PC-3 (cell line): ENCODE measurements at regions of chr1 and their contacts with region 1.

Region 1: DNA sequence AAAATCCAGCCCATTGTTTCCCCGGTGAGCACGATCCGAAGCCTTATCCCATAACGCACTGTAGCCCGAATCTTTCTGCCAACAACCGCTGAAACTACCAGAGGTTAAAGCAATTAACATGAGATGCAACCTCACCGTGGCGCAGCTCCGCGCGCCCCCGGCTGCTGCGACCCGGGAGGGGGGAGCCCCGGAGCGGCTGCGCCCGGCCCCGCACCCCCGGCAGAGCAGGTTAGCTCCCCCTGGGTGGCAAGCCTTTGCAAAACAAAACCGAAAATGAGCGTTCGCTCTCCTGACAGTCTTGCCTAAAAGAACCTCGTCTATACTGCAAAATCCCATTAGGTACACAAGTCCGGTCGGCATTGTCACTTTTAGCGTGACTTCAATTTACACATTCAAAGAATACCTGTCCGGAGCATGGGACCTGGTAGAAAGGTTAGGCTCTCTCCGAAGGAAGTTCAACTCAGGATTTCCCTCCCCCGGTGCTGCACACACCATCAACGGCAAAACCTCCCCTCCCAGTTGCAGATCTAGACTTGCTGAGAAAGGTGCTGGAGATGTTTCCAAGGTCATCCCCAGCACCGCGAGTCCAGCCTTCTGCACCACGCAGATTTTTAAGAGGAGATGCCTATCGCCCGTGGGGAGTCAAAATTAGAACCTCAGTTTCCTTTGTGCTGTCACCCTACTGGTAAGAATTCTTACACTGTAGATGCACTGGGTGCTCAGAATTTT is 107.5 kb downstream of the ZNF281 start:
- DNase-seq: peak; percentile 67
- ATAC-seq: peak; percentile 71
- H3K4me3 ChIP-seq: peak overlapping the region; percentile 74
- H3K27ac ChIP-seq: no peak overlapping the region
- H3K4me1 ChIP-seq: peaks cover 8% of the 10 kb centered on the region
- H3K27me3 ChIP-seq: no peaks in the 10 kb centered on the region
- CTCF ChIP-seq: peak; percentile 61; the same call in 1 of the 2 replicates

Region 2: GRCh38 chr1:200139661-200140250 is 162.6 kb before region 1 on chr1:
- CTCF ChIA-PET with region 1: interaction called, 4 read pairs
- POLR2A ChIA-PET with region 1: no interaction called
- intact Hi-C with region 1: loop called (anchors 1 kb)
- DNase-seq: peak; percentile 93
- ATAC-seq: peak; percentile 100
- H3K4me3 ChIP-seq: no peak overlapping the region
- H3K27ac ChIP-seq: no peak overlapping the region
- H3K4me1 ChIP-seq: no peaks in the 10 kb centered on the region
- H3K27me3 ChIP-seq: no peaks in the 10 kb centered on the region
- CTCF ChIP-seq: peak; percentile 100

Region 3: GRCh38 chr1:200174525-200175295 is 127.6 kb before region 1 on chr1:
- CTCF ChIA-PET with region 1: no interaction called
- POLR2A ChIA-PET with region 1: interaction called, 16 read pairs
- intact Hi-C with region 1: no loop called
- DNase-seq: no peak
- ATAC-seq: no peak
- H3K4me3 ChIP-seq: no peak overlapping the region
- H3K27ac ChIP-seq: no peak overlapping the region
- H3K4me1 ChIP-seq: peaks cover 51% of the 10 kb centered on the region
- H3K27me3 ChIP-seq: no peaks in the 10 kb centered on the region
- CTCF ChIP-seq: no peak

Region 4: GRCh38 chr1:200279810-200280411 is 22.4 kb before region 1 on chr1:
- CTCF ChIA-PET with region 1: no interaction called
- POLR2A ChIA-PET with region 1: no interaction called
- intact Hi-C with region 1: loop called (anchors 1 kb)
- DNase-seq: peak; percentile 99
- ATAC-seq: peak; percentile 88
- H3K4me3 ChIP-seq: no peak overlapping the region
- H3K27ac ChIP-seq: no peak overlapping the region
- H3K4me1 ChIP-seq: no peaks in the 10 kb centered on the region
- H3K27me3 ChIP-seq: no peaks in the 10 kb centered on the region
- CTCF ChIP-seq: peak; percentile 97

Region 5: GRCh38 chr1:200379431-200379755 is 77.0 kb after region 1 on chr1:
- CTCF ChIA-PET with region 1: interaction called, 11 read pairs
- POLR2A ChIA-PET with region 1: interaction called, 4 read pairs
- intact Hi-C with region 1: no loop called
- DNase-seq: peak; percentile 99
- ATAC-seq: peak; percentile 87
- H3K4me3 ChIP-seq: peak overlapping the region; percentile 32; the same call in 1 of the 2 replicates
- H3K27ac ChIP-seq: peak overlapping the region; percentile 73
- H3K4me1 ChIP-seq: peaks cover 51% of the 10 kb centered on the region
- H3K27me3 ChIP-seq: no peaks in the 10 kb centered on the region
- CTCF ChIP-seq: no peak

Region 6: DNA sequence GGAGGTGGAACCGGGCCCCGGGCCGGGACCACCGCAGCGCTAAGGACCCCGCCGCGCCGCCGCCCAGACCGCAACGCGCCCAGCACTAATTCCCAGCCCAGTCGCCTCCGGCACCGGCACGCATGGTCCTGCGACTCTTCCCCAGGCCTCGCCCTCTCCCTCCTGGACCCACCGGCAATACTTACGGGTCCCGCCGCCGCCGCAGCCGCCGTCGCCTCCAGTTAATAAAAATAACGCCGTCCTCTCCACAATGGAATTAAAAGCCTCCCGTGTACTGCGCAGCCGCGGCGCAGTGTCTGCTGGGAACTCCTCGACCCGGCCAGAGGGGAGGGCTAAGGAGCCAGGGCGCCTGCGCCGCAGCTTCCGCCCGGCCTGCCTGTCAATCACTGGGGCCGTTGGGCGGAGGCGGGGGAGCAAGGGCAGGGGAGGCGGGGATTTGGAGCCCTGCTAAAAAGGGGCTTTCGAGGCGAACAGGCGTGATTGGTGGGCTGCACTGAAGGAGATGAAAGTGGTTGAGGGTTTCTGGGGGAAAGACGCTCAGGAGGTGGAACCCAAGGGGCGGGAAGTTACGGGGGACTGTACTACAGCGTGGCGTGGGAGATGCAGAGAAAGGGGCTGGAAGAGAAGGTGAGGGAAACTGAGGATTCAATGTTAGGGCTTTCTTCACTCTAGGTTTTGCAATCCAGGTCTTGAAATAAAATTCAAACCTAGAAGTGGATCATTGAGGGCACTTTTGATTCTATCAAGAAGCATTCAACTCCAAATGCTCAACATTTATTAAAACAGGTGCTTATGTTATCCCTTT is 107.6 kb after region 1 on chr1 and contains the start of gene ZNF281:
- CTCF ChIA-PET with region 1: no interaction called
- POLR2A ChIA-PET with region 1: interaction called, 5 read pairs
- intact Hi-C with region 1: loop called (anchors 1 kb)
- DNase-seq: peak; percentile 99
- ATAC-seq: peak; percentile 96
- H3K4me3 ChIP-seq: peak within 1 kb of the TSS; percentile 85
- H3K27ac ChIP-seq: peak within 1 kb of the TSS; percentile 48
- H3K4me1 ChIP-seq: peaks cover 60% of the 10 kb centered on the region
- H3K27me3 ChIP-seq: no peaks in the 10 kb centered on the region
- CTCF ChIP-seq: no peak
- total RNA-seq, gene ZNF281: 23.3 and 26.6 TPM in 2 replicates